ENCODE measurements at regions of chr3 and their contacts with region 1.

Region 1: GRCh38 chr3:29759411-29760225 is 478.7 kb downstream of the RBMS3 start:
- DNase-seq: no peak
- H3K4me3 ChIP-seq: peak overlapping the region in 1 of 2 donors; percentile 21
- H3K27ac ChIP-seq: peak overlapping the region; percentile 76 to 81
- H3K4me1 ChIP-seq: peaks cover 4 to 35% of the 10 kb centered on the region in 2 donors
- H3K27me3 ChIP-seq: no peaks in the 10 kb centered on the region
- CTCF ChIP-seq: no peak

Region 2: GRCh38 chr3:29065211-29065785 is 694.3 kb before region 1 on chr3:
- intact Hi-C with region 1: loop called (anchors 10 kb)
- DNase-seq: peak; percentile 62 to 97
- H3K4me3 ChIP-seq: no peak overlapping the region
- H3K27ac ChIP-seq: peak overlapping the region; percentile 55 to 66
- H3K4me1 ChIP-seq: peaks cover 0 to 10% of the 10 kb centered on the region in 2 donors
- H3K27me3 ChIP-seq: no peaks in the 10 kb centered on the region
- CTCF ChIP-seq: no peak

Region 3: DNA sequence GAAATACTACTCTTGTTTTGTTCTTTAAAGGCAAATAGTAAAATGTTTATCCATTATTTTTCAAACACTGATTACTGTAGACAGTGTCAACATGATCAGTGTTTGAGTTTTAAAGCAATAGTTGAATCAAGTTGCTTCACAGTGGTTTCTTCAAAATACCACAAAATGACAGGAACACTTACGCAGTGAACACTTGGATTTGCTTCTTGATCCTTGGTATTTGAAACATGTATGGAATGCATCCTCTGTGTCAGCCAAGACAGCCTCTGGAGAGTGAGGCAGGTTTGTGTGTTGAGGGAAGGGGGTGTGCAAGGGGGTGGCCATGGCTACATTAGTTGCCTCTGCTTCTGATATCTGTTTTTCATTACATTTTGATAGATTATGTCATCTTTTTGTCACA is 65.8 kb before region 1 on chr3:
- intact Hi-C with region 1: loop called (anchors 2 kb)
- DNase-seq: no peak
- H3K4me3 ChIP-seq: no peak overlapping the region
- H3K27ac ChIP-seq: peak overlapping the region; percentile 2 to 41
- H3K4me1 ChIP-seq: peaks cover 3 to 30% of the 10 kb centered on the region in 2 donors
- H3K27me3 ChIP-seq: no peaks in the 10 kb centered on the region
- CTCF ChIP-seq: no peak